ENCODE measurements at regions of chr2 and their contacts with region 1.

Region 1: GRCh38 chr2:70871398-70872211 is 36.0 kb upstream of the CD207 start:
- DNase-seq: peak; percentile 85 to 90 (median 87)
- ATAC-seq: peak; percentile 98 to 100 (median 98)
- H3K4me3 ChIP-seq: no peak overlapping the region
- H3K27ac ChIP-seq: no peak overlapping the region
- H3K4me1 ChIP-seq: peaks cover 0 to 3% (median 0%) of the 10 kb centered on the region in 4 donors
- H3K27me3 ChIP-seq: peaks cover 0 to 10% of the 10 kb centered on the region in 2 donors
- CTCF ChIP-seq: peak; percentile 81 to 92 (median 88)
- POLR2A ChIP-seq: no peak

Region 2: GRCh38 chr2:70771446-70771845 is 100.2 kb before region 1 on chr2:
- intact Hi-C with region 1: no loop called
- DNase-seq: no peak
- ATAC-seq: no peak
- H3K4me3 ChIP-seq: no peak overlapping the region
- H3K27ac ChIP-seq: no peak overlapping the region
- H3K4me1 ChIP-seq: peaks cover 0 to 13% (median 0%) of the 10 kb centered on the region in 4 donors
- H3K27me3 ChIP-seq: peaks cover 11% of the 10 kb centered on the region in 2 donors
- CTCF ChIP-seq: no peak
- POLR2A ChIP-seq: no peak

Region 3: GRCh38 chr2:70789304-70790135 is 82.1 kb before region 1 on chr2:
- intact Hi-C with region 1: no loop called
- DNase-seq: peak; percentile 58 to 69 (median 63)
- ATAC-seq: peak; percentile 83 to 92 (median 89)
- H3K4me3 ChIP-seq: peak overlapping the region in 1 of 3 donors; percentile 16
- H3K27ac ChIP-seq: no peak overlapping the region
- H3K4me1 ChIP-seq: peaks cover 0 to 13% (median 0%) of the 10 kb centered on the region in 4 donors
- H3K27me3 ChIP-seq: peaks cover 0 to 14% of the 10 kb centered on the region in 2 donors
- CTCF ChIP-seq: peak; percentile 41 to 67 (median 64)
- POLR2A ChIP-seq: no peak

Region 4: GRCh38 chr2:70919672-70920366 is 48.2 kb after region 1 on chr2:
- intact Hi-C with region 1: loop called (anchors 10 kb)
- DNase-seq: peak; percentile 79 to 83 (median 80)
- ATAC-seq: peak; percentile 94 to 99 (median 98)
- H3K4me3 ChIP-seq: no peak overlapping the region
- H3K27ac ChIP-seq: no peak overlapping the region
- H3K4me1 ChIP-seq: no peaks in the 10 kb centered on the region
- H3K27me3 ChIP-seq: no peaks in the 10 kb centered on the region
- CTCF ChIP-seq: peak; percentile 84 to 94 (median 91)
- POLR2A ChIP-seq: no peak

Region 5: GRCh38 chr2:71006955-71007799 is 135.6 kb after region 1 on chr2:
- intact Hi-C with region 1: no loop called
- DNase-seq: no peak
- ATAC-seq: no peak
- H3K4me3 ChIP-seq: no peak overlapping the region
- H3K27ac ChIP-seq: no peak overlapping the region
- H3K4me1 ChIP-seq: no peaks in the 10 kb centered on the region
- H3K27me3 ChIP-seq: no peaks in the 10 kb centered on the region
- CTCF ChIP-seq: no peak
- POLR2A ChIP-seq: no peak

Region 6: DNA sequence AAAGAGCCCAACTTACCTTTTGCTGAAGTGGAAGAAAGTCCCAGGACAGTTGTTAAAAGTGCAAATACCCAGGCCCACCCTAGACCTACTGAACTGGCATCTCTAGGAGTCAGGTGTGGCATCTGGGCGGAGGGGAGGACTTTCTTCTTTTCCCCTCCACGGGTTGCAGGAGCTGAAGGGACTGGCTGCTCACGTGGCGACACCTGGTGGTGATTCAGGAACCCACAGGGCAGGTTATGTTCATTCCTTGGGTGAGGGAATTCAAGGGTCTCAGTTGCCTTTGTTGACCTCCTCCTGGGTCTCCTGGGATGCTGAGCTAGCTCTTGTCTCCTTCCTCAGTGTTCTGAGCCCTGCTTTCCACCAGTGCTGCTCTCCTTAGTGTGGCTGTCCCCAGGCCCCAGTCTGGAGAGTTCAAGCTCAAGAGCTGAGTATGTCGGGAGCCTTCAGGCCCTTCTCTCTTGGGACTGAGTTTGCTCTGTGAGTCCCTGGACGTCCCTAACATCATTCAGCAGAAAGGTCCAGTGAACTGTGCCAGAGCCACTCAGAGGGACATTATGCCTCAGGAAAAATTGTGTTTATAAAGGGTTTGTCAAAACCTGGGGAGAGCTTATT is 638.7 kb after region 1 on chr2:
- intact Hi-C with region 1: no loop called
- DNase-seq: peak; percentile 67 to 73 (median 72)
- ATAC-seq: peak; percentile 73 to 88 (median 85)
- H3K4me3 ChIP-seq: no peak overlapping the region
- H3K27ac ChIP-seq: no peak overlapping the region
- H3K4me1 ChIP-seq: no peaks in the 10 kb centered on the region
- H3K27me3 ChIP-seq: no peaks in the 10 kb centered on the region
- CTCF ChIP-seq: peak; percentile 87 to 93 (median 90)
- POLR2A ChIP-seq: no peak

Measured in right lobe of liver (tissue), 6 donors.